Caco-2 (cell line): ENCODE measurements at regions of chr4 and their contacts with region 1.

Region 1: DNA sequence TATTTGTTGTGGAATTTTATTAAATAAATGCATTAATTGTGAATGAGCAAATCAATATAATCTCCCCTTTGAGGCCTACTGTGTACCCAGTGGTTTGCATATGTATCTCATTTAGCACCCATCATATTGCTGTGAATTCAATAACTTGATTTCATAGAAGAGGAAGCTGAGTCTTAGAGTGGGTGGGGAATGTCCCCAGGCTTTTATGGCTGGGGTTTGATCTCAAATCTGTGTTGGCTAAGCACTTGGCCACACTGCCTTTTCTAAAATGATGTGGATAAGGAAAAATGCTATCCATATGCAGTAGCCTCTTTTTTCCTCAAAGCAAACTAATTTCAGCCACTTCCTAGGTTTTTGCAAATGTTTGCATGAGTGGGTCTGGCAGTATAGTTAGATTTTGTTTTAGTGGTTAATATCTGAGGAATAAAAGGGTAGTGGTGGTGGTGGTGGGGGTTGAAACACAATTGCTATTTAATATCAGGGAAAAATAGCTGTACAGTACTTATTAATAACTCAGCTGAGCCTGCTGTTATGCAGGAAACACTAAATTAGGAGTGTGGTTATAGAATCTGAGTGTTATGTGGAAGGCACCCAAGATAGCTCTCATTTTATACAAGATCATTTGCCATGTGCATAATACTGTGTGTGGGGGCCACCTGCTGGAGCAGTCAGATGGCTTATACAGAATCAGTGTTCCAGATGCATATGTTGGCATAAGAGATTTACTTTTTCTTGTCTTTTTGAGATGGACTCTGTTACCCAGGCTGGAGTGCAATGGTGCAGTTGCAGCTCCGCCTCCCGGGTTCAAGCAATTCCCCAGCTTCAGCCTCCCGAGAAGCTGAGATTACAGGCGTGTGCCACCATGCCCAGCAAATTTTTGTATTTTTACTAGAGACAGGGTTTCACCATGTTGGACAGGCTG is 108.0 kb downstream of the TMEM131L start:
- DNase-seq: peak; percentile 58 to 60
- H3K4me3 ChIP-seq: no peak overlapping the region
- H3K4me3 Mint-ChIP-seq: no peak overlapping the region
- H3K27ac Mint-ChIP-seq: no peak overlapping the region
- H3K4me1 ChIP-seq: peaks cover 40% of the 10 kb centered on the region
- H3K4me1 Mint-ChIP-seq: peaks cover 8% of the 10 kb centered on the region
- H3K27me3 ChIP-seq: no peaks in the 10 kb centered on the region
- H3K27me3 Mint-ChIP-seq: no peaks in the 10 kb centered on the region
- CTCF ChIP-seq: peak; percentile 31 to 71

Region 2: DNA sequence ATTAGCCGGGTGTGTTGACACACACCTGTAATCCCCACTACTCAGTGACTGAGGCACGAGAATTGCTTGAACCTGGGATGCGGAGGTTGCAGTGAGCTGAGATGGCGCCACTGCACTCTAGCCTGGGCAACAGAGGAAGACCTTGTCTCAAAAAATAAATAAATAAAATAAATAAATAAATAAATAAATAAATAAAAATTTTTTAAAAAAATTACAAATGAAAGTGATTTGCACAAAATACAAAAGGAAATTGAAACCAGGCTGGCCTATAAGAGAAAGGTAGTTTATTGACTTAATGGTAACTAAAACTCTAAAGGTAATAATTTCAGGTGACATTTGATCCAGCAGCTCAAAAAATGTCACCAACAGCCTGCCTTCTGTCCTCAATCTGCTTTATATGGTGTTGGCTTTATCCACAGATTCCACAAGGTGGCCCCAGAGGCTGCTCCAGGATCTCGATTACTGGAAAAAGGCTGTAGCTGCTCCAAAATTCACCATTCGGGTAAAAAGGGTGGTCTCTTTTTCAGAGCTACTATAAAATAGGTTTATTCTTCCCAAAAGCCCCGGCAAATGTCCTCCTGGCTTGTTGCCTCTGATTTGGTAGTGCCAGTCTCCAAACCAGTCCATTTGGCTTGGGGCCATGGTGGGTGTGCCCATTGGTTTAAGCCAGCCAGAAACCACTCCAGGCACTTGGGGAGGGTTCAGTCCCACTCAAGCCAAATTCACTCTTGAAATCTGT is 431.3 kb before region 1 on chr4:
- CTCF ChIA-PET with region 1: interaction called, 4 read pairs
- POLR2A ChIA-PET with region 1: no interaction called
- intact Hi-C with region 1: loop called (anchors 1 kb)
- DNase-seq: peak; percentile 74 to 78
- H3K4me3 ChIP-seq: no peak overlapping the region
- H3K4me3 Mint-ChIP-seq: no peak overlapping the region
- H3K27ac Mint-ChIP-seq: peak overlapping the region; percentile 53
- H3K4me1 ChIP-seq: peaks cover 8% of the 10 kb centered on the region
- H3K4me1 Mint-ChIP-seq: peaks cover 13% of the 10 kb centered on the region
- H3K27me3 ChIP-seq: no peaks in the 10 kb centered on the region
- H3K27me3 Mint-ChIP-seq: no peaks in the 10 kb centered on the region
- CTCF ChIP-seq: peak; percentile 73 to 78

Region 3: GRCh38 chr4:153344131-153345010 is 229.8 kb before region 1 on chr4 and contains the start of gene MND1:
- CTCF ChIA-PET with region 1: interaction called, 9 read pairs
- POLR2A ChIA-PET with region 1: no interaction called
- intact Hi-C with region 1: loop called (anchors 1 kb)
- DNase-seq: peak; percentile 89 to 94
- H3K4me3 ChIP-seq: peak within 1 kb of the TSS; percentile 88
- H3K4me3 Mint-ChIP-seq: peak within 1 kb of the TSS; percentile 81
- H3K27ac Mint-ChIP-seq: peak within 1 kb of the TSS; percentile 82
- H3K4me1 ChIP-seq: peaks cover 17% of the 10 kb centered on the region
- H3K4me1 Mint-ChIP-seq: peaks cover 20% of the 10 kb centered on the region
- H3K27me3 ChIP-seq: no peaks in the 10 kb centered on the region
- H3K27me3 Mint-ChIP-seq: no peaks in the 10 kb centered on the region
- CTCF ChIP-seq: peak; percentile 62 to 95
- total RNA-seq, gene MND1: 19.8 and 21.8 TPM in 2 replicates

Region 4: GRCh38 chr4:153393397-153393796 is 180.7 kb before region 1 on chr4:
- CTCF ChIA-PET with region 1: no interaction called
- POLR2A ChIA-PET with region 1: no interaction called
- intact Hi-C with region 1: no loop called
- DNase-seq: no peak
- H3K4me3 ChIP-seq: no peak overlapping the region
- H3K4me3 Mint-ChIP-seq: no peak overlapping the region
- H3K27ac Mint-ChIP-seq: no peak overlapping the region
- H3K4me1 ChIP-seq: no peaks in the 10 kb centered on the region
- H3K4me1 Mint-ChIP-seq: no peaks in the 10 kb centered on the region
- H3K27me3 ChIP-seq: no peaks in the 10 kb centered on the region
- H3K27me3 Mint-ChIP-seq: no peaks in the 10 kb centered on the region
- CTCF ChIP-seq: no peak

Region 5: GRCh38 chr4:153466081-153466948 is 107.8 kb before region 1 on chr4 and contains the start of gene TMEM131L:
- CTCF ChIA-PET with region 1: interaction called, 42 read pairs
- POLR2A ChIA-PET with region 1: interaction called, 6 read pairs
- intact Hi-C with region 1: loop called (anchors 1 kb)
- DNase-seq: peak; percentile 77 to 78
- H3K4me3 ChIP-seq: peak within 1 kb of the TSS; percentile 62
- H3K4me3 Mint-ChIP-seq: peak within 1 kb of the TSS; percentile 90
- H3K27ac Mint-ChIP-seq: peak within 1 kb of the TSS; percentile 73
- H3K4me1 ChIP-seq: peaks cover 14% of the 10 kb centered on the region
- H3K4me1 Mint-ChIP-seq: no peaks in the 10 kb centered on the region
- H3K27me3 ChIP-seq: no peaks in the 10 kb centered on the region
- H3K27me3 Mint-ChIP-seq: no peaks in the 10 kb centered on the region
- CTCF ChIP-seq: peak in 1 of 2 experiments; percentile 8
- total RNA-seq, gene TMEM131L: 20.8 and 20.9 TPM in 2 replicates

Region 6: DNA sequence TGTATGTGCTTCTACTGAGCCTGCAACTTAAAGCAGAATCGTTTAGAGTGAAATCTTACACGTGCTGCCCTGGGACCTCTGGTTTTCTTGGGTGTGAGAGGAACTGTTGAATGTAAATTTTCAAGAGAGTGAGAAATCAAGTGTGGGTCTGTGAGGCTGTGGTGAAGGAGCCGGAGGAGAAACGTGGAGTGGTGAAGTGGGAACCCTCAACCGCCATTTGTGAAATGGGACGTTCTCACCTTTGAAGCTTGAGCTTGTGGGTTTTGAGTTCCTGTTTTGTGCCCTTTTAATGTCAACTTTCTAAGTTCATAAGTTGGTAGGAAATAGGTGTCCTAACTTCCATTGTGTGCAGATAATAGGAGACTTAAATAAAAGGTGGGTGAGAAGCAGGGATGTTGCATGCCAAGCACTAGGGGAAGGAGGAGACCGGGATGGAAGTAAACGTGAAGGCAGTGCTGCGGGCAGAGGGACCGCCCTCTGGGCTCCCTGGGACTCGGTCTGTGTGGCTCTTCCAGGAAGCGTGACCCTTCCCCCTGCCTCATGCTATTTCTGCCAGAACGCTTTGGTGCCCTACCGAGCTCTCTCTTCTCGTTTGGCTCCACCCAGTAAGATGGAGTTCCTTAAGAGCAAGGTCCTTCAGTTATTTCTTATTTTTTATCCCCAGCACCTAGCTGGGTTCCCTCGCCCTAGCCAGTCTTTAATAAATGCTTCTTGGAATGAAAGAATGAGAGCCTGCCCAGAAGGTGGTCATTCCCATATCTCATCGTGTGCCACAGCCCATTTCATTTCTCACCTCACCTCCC is 51.9 kb before region 1 on chr4:
- CTCF ChIA-PET with region 1: interaction called, 3 read pairs
- POLR2A ChIA-PET with region 1: no interaction called
- intact Hi-C with region 1: loop called (anchors 2 kb)
- DNase-seq: no peak
- H3K4me3 ChIP-seq: no peak overlapping the region
- H3K4me3 Mint-ChIP-seq: no peak overlapping the region
- H3K27ac Mint-ChIP-seq: peak overlapping the region; percentile 34
- H3K4me1 ChIP-seq: peaks cover 71% of the 10 kb centered on the region
- H3K4me1 Mint-ChIP-seq: peaks cover 53% of the 10 kb centered on the region
- H3K27me3 ChIP-seq: no peaks in the 10 kb centered on the region
- H3K27me3 Mint-ChIP-seq: no peaks in the 10 kb centered on the region
- CTCF ChIP-seq: no peak